ENCODE measurements at regions of chr12 and their contacts with region 1.

Region 1: DNA sequence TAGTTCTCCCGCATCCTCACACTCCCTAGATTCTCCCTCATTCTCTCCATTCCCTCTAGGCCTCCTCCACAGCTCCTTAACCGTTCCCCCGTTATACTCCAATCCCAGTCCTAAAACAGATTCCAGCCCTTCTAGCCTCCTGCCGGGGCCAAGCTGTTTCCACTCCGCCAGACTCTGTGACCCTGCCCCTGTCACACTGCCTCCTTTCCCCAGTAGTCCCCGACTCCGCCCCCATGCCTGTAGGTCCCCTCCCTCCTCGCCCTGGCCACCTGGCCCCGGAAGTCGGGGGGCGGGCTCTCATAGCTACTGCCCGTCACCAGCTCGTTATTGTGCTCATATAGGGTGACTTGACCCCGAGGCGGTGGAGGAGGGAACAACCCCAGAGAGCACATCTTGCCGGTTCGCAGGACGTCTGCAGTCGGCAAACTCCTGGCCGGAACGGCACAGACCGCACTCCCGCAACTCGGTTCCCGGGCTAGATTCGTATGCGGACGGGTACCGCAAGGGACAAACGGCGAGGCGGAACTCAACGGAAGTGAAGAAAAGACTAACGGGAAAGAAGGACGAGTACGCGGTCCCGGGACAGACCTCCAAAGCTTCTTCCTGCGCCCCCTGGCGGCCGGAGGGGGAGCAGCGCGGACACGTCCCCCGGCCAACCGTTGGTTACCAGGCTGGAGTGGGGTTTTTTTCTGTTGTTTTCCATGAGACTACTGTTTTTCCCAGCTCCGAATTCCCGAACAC is at the start of gene AAAS:
- DNase-seq: peak; percentile 90 to 96
- H3K4me3 ChIP-seq: peak within 1 kb of the TSS; percentile 87
- H3K27ac ChIP-seq: peak within 1 kb of the TSS; percentile 56
- H3K4me1 ChIP-seq: peaks cover 16% of the 10 kb centered on the region
- H3K27me3 ChIP-seq: no peaks in the 10 kb centered on the region
- CTCF ChIP-seq: peak; percentile 96
- total RNA-seq, gene AAAS: 53.4 and 67.3 TPM in 2 replicates

Region 2: GRCh38 chr12:51601241-51601640 is 1720.0 kb before region 1 on chr12:
- CTCF ChIA-PET with region 1: no interaction called
- POLR2A ChIA-PET with region 1: no interaction called
- intact Hi-C with region 1: no loop called
- DNase-seq: no peak
- H3K4me3 ChIP-seq: no peak overlapping the region
- H3K27ac ChIP-seq: no peak overlapping the region
- H3K4me1 ChIP-seq: no peaks in the 10 kb centered on the region
- H3K27me3 ChIP-seq: peaks cover 44% of the 10 kb centered on the region
- CTCF ChIP-seq: no peak

Region 3: DNA sequence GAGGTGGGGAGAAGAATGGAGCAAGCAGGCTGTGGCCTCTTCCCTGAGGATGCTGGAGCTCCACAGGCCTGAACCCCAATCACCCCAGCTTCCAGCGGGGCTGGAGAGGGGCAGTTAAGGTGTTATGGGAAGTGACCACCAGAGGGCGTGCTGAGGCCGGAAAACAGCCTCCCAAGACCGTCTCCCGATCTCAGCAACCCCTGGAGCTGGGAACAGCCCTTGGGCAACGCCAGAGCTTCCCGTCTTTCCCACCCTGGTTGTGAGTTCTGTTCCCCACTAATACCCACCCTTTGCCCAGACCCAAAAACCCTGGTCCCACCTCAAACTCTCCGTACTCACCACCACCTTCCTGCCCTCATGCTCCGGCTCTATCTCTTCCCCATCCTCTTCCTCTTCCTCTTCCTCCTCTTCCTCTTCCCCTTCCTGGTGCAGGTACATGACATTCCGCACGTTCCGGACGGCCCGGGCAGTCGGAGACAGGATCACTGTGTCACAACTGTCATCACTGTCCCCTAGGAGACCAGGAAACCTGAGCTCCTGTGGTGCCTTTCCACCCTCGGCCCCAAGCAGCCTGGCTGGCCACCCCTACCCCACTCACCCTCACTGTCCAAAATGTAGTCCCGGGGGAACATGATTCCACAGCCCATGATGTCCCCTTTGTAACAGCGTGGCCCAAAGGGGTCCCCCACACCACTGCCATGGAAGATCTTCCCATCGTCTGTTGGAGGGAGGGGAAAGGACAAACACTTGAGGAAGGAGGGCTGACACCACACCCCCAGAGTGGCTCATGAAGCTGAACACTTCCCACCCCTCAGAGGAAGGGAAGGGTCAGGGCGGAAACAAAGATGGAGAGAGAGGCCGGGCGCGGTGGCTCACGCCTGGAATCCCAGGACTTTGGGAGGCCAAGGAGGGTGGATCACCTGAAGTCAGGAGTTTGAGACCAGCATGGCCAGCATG is 255.0 kb before region 1 on chr12:
- CTCF ChIA-PET with region 1: interaction called, 8 read pairs
- POLR2A ChIA-PET with region 1: no interaction called
- intact Hi-C with region 1: loop called (anchors 1 kb)
- DNase-seq: peak; percentile 53 to 74
- H3K4me3 ChIP-seq: no peak overlapping the region
- H3K27ac ChIP-seq: peak overlapping the region; percentile 50; the same call in 1 of the 2 replicates
- H3K4me1 ChIP-seq: peaks cover 25% of the 10 kb centered on the region
- H3K27me3 ChIP-seq: no peaks in the 10 kb centered on the region
- CTCF ChIP-seq: peak; percentile 91

Region 4: DNA sequence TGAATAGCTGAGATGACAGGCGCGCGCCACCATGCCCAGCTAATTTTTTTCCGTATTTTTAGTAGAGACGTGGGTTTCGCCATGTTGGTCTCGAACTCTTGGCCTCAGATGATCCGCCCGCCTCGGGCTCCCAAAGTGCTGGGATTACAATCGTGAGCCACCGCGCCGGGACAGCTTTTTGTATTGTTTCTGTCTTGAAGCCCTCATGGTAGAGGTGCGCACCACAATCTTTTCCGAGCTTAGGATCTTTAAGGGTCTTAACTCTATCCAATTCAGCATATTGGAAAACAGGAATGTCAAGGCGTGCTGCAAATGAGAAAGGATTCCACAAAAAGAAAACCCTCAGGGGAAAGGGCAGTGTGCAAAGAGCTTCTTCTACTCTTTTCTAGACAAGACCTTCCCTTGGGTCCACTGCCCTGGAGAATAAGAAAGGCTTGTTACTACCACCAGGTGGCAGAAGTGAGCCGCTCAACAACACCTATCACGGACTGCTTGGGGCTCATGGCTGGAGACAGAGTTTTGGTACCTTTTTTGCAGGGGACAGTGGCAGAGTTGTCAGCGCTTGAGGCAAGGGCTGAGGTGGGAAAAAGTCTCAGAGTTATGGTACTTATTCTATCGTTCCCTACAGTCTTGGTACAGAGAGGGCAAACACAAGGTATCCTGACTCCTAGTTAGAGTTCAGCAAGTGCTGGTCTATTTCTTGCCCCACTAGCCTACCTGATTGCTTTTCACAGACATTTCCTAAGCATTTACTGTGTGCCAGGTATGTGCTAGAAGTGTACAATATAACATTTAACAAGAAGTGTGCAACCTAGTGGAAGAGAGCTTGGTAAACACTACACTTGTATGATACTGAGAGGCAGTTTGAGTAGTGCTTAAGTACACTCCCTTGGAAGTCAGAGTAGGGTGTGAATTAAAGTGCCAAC is 31.4 kb after region 1 on chr12:
- CTCF ChIA-PET with region 1: interaction called, 4 read pairs
- POLR2A ChIA-PET with region 1: interaction called, 10 read pairs
- intact Hi-C with region 1: no loop called
- DNase-seq: peak; percentile 80
- H3K4me3 ChIP-seq: no peak overlapping the region
- H3K27ac ChIP-seq: peak overlapping the region; percentile 29
- H3K4me1 ChIP-seq: peaks cover 6% of the 10 kb centered on the region
- H3K27me3 ChIP-seq: no peaks in the 10 kb centered on the region
- CTCF ChIP-seq: peak; percentile 91

Region 5: DNA sequence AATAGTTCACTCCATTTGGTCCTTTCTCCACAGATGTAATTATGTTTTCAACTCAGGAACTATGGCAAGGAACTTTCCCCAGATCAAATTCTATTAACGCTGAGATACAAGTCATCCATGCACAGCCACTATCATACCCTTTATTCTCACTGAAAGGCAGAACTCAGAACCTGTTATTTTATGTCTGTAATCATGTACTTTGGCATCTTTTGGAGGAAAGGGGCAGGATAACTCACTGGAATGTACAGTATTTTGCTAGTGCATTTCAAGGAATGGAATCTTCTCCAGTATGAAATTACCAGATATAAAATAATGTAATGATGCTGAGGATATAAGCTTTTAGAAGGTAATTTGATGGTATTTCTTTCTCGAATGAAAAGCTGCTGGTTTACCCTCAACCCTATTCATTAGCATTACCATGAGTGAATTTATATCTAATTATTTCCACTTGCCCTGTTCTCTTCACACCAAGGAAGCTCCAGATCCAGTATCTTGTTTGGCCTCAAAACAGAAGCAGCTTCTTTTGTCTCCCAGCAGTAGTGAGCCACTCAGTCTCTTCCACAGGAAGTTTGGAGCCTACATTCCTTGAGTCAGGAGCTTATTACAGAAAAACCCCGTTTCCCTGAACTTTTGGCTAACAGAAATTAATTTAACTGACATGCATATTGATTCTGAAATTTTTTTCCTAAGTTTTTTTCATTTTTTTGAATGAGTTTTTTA is 92.4 kb after region 1 on chr12:
- CTCF ChIA-PET with region 1: interaction called, 3 read pairs
- POLR2A ChIA-PET with region 1: interaction called, 15 read pairs
- intact Hi-C with region 1: no loop called
- DNase-seq: no peak
- H3K4me3 ChIP-seq: no peak overlapping the region
- H3K27ac ChIP-seq: no peak overlapping the region
- H3K4me1 ChIP-seq: no peaks in the 10 kb centered on the region
- H3K27me3 ChIP-seq: no peaks in the 10 kb centered on the region
- CTCF ChIP-seq: no peak

Region 6: DNA sequence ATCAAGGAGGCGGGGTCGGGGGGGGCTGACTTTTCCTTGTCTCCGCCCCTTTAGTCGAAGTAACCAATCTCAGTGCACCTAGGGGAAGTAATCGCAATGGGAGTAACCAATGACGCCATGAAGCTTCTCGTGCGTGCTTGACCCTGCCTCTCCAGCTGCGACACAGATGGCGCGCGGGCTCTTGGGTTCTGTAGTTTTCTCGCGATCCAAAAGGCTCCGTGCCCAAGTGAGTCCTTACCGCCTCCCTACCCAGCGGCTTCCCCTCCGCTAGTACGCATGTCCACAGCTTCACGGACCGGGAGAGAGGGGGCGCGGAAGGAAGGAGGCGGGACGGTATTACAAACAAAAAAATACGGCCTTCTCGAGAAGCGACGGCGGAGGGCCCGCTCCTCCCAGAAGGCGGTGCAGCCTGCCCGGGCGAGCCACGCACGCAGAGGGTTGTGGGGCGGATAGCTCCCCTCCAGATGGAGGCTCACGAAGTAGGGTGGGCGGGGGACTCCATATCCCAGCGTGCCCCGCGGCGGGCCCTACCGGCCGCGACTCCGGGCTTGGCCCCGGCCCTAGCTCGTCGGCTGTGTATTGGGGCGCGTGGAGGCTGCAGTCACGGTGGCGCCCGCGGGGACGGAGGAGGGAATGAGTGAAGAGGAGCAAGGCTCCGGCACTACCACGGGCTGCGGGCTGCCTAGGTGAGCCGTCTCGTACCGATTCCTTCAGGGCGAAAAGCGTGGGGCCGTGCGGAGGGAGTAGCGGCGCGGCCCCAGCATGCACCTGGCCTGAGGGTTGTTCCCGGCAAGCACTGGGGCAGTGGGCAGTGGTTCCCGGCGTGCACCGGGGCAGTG is 179.8 kb after region 1 on chr12 and contains the start of gene TARBP2:
- CTCF ChIA-PET with region 1: interaction called, 14 read pairs
- POLR2A ChIA-PET with region 1: interaction called, 10 read pairs
- intact Hi-C with region 1: loop called (anchors 2 kb)
- DNase-seq: peak; percentile 98
- H3K4me3 ChIP-seq: peak within 1 kb of the TSS; percentile 77
- H3K27ac ChIP-seq: peak within 1 kb of the TSS; percentile 81
- H3K4me1 ChIP-seq: peaks cover 17% of the 10 kb centered on the region
- H3K27me3 ChIP-seq: no peaks in the 10 kb centered on the region
- CTCF ChIP-seq: no peak
- total RNA-seq, gene TARBP2: 47.8 and 53.3 TPM in 2 replicates

Region 7: DNA sequence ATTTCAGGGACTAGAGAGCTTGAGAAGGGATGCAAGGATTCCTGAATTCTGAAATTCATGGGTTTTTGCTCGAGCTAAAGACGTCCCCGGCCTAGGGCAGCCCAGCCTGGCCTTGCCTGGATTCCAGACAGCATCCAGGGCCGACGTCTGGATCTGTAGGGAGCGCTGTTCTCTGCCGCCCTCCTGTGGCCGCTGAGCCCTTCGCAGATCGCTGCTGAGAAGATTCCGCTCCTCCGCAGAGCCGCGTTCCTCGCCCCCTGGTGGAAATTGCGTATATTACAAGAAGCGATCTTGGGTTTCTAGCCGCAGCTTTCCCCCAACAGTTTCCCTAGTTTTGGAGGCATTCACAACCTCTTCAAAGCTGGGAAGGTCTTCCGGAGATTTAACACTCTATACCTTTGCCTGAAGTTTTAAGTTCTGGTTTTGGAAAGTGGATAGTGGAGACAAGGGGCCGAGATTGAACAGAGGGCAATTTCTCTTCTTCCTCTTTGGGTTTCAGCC is 425.4 kb after region 1 on chr12:
- CTCF ChIA-PET with region 1: no interaction called
- POLR2A ChIA-PET with region 1: no interaction called
- intact Hi-C with region 1: loop called (anchors 2 kb)
- DNase-seq: peak; percentile 74 to 89
- H3K4me3 ChIP-seq: no peak overlapping the region
- H3K27ac ChIP-seq: no peak overlapping the region
- H3K4me1 ChIP-seq: no peaks in the 10 kb centered on the region
- H3K27me3 ChIP-seq: 0 out of 2 replicates have a peak, but pooled peaks cover 4% of the 10 kb centered on the region
- CTCF ChIP-seq: peak; percentile 99

Measured in PC-9 (cell line).